BJ (cell line): ENCODE measurements at regions of chr5 and their contacts with region 1.

Region 1: GRCh38 chr5:1021136-1021968 is 12.8 kb downstream of the NKD2 start:
- DNase-seq: peak; percentile 10
- H3K4me3 ChIP-seq: no peak overlapping the region
- H3K27me3 ChIP-seq: peaks cover 17% of the 10 kb centered on the region
- CTCF ChIP-seq: no peak

Region 2: DNA sequence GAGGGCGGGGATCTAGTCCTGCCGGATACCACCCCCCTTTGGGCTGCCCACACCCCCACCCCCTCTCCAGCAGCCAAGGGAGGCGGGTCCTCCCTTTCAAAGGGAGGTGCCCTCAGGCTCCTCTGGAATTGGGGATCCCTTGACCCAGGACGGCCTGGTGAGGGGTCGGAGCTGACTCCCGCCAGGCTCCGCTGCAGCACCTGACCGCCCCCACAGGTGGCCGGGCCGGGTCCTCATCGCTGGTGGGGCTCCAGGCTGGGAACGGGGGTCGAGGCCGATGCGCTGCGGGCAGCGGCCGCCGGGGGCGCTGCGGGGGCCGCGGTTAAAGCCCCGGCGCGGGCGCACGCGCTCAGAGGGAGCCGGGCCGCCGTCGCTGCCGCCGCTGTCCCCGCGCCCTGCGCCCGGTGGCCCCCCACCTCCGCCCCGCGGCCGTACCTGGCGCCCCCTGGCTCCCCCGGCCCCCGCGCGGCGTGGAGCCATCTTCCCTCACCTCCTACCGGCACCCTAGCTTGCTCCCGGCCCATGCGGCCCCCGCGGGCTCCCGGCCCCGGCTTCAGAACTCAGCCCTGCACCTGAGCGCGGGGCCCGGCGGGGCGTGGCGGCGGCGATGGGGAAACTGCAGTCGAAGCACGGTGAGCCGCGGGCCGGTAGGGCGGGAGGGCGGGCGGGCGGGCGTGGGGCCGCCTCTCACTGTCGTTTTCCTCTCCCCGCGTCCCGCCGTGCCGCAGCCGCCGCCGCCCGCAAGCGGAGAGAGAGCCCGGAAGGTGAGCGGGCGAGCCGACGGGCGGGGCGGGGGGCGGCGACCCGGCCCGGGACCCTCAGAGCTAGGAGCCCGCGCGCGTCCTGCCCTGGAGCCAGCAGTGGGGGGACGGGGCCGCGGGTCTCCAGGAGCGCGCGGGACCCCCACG is 12.6 kb before region 1 on chr5 and contains the start of gene NKD2:
- CTCF ChIA-PET with region 1: interaction called, 34 read pairs
- POLR2A ChIA-PET with region 1: no interaction called
- DNase-seq: no peak
- H3K4me3 ChIP-seq: no peak within 1 kb of the TSS
- H3K27me3 ChIP-seq: peaks cover 50% of the 10 kb centered on the region
- CTCF ChIP-seq: peak; percentile 16; the same call in 1 of the 2 replicates
- polyA plus RNA-seq, gene NKD2: not detected in 2 replicates

Region 3: DNA sequence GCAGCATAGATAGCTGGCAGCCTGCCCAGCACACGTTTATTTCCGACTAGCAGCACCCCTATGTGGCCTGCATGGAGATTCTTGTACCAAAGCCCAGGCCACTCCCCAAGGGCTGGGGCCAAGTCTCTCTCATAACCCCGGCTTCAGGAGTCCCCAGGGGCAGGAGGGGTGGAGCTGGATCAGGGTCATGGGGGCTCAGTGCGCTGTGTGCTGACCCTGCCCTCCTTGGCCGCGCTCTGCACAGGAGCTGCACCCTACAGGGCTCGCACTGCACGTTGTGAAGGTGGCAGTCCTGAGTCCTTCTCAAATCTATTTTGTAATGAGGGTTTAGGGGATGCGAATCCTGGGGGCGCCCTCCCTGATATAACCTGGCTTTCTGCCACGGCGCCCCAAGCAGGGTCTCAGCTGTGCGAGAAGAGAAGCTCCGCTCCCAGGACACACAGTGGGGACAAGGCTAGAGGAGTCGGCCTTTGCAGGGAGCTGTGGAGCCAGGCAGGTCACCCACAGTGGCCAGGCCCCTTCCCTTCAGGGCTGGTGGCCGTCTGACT is 15.8 kb after region 1 on chr5:
- CTCF ChIA-PET with region 1: no interaction called
- POLR2A ChIA-PET with region 1: no interaction called
- DNase-seq: no peak
- H3K4me3 ChIP-seq: no peak overlapping the region
- H3K27me3 ChIP-seq: peaks cover 2% of the 10 kb centered on the region; the same call in 1 of the 2 replicates
- CTCF ChIP-seq: no peak